Left colon (tissue), 2 donors: ENCODE measurements at regions of chr9 and their contacts with region 1.

Region 1: DNA sequence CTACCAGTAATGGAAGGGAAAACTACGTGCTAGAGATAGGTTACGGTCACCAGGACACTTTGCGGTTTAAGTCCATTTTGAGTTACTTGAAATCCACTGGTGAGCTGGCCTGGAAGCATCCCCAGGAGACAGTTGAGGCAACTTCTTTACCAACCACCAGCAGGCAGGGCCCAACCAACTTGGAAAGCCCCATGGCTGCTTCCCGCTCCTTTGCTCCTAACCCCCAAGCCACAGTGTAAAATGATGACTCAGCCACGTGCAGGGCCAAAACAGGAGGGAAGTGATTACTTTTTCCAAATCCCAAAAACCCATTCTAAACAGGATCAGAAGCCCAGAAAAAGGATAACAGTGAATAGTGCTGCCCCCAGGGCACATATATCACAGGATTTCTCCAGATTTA is 87.4 kb downstream of the PAX5 start:
- DNase-seq: no peak
- ATAC-seq: no peak

Region 2: DNA sequence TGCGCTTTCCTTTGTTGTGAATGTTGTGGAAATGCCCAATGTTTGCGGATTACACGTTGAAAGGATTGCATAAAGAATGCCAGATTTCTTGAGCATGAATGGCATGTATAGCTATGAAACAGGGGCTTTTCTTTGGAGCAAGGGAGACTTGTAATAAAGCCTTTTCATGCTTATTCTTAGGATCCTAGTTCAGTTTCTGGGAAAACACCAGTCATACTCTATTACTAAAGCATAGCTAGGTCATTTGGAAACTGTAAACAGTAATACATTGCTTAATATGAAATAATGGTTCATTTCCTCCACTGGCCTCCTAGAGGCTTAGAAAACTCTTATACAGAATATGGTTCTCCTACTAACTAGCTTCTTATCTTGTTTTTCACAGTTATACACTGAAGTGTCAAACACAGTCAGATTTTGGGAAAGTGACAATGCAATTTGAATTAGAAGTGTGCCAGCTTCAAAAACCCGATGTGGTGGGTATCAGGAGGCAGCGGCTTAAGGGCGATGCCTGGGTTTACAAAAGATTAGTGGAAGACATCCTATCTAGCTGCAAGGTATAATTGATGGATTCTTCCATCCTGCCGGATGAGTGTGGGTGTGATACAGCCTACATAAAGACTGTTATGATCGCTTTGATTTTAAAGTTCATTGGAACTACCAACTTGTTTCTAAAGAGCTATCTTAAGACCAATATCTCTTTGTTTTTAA is 269.7 kb before region 1 on chr9:
- intact Hi-C with region 1: no loop called
- DNase-seq: no peak
- ATAC-seq: no peak

Region 3: GRCh38 chr9:36873247-36873875 is 73.3 kb before region 1 on chr9:
- intact Hi-C with region 1: no loop called
- DNase-seq: peak; percentile 60 to 83
- ATAC-seq: peak; percentile 85

Region 4: DNA sequence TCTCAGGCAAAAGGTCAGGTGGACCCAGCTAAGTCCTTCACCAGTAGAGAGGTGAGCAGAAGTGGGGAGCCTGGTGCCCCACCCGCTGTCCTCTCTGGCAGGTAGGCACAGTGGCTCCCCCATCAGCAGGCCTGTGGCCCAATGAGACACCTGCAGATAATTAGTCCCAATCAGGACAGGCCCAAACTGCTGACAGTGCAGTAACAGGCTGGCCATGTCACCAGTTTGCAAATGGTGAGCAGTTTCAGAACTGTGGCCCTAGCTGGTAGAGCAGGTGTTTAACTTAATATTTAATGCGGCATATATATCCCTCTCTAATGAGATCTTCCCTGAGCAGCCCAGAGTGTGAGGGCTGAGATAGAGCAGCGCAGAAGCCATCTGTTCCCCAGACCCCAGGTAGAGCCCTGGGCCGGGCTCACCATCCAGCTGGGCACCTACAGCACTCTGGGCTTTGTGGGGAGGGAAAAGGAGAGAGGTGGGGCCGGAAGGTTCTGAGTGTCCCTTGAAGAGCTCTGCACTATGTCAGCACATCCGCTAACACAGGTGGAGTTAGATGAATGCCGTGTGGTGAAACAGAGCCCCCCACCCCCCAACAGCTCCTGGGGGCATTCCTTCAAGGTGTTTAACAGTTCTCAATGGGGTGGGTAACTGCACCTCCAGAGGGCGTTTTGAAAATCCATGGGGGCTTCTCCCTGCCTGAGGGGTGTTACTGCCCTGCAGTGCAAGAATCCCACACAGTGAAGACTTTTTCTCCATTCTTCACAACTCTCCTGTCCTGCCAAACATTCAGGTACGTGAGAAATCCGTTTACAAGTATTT is 33.1 kb before region 1 on chr9:
- intact Hi-C with region 1: loop called in 1 of 2 experiments (anchors 5 kb)
- DNase-seq: no peak
- ATAC-seq: no peak

Region 5: DNA sequence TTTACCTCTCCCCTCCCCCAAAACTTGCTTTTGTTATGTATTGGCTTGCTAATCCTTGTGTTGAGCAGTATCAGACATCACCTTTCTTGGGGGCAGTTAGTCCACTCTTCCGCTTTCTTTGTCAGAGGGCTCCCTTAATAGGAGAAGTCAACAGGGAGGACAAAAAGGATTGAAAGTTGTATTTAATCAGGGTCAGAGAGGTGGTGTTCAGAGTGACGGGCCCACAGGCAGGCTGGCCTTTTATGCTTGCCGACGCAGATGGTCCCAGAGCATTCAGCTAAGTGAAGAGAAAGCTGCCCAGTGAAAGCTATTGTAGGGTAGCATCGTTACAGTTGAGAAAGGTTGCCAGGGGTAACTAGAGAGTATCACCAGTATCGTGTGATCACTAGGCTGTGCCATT is 304.8 kb after region 1 on chr9:
- intact Hi-C with region 1: no loop called
- DNase-seq: no peak
- ATAC-seq: no peak

Region 6: GRCh38 chr9:37550781-37551180 is 604.1 kb after region 1 on chr9:
- intact Hi-C with region 1: no loop called
- DNase-seq: no peak
- ATAC-seq: no peak